PC-9 (cell line): ENCODE measurements at regions of chr7 and their contacts with region 1.

Region 1: DNA sequence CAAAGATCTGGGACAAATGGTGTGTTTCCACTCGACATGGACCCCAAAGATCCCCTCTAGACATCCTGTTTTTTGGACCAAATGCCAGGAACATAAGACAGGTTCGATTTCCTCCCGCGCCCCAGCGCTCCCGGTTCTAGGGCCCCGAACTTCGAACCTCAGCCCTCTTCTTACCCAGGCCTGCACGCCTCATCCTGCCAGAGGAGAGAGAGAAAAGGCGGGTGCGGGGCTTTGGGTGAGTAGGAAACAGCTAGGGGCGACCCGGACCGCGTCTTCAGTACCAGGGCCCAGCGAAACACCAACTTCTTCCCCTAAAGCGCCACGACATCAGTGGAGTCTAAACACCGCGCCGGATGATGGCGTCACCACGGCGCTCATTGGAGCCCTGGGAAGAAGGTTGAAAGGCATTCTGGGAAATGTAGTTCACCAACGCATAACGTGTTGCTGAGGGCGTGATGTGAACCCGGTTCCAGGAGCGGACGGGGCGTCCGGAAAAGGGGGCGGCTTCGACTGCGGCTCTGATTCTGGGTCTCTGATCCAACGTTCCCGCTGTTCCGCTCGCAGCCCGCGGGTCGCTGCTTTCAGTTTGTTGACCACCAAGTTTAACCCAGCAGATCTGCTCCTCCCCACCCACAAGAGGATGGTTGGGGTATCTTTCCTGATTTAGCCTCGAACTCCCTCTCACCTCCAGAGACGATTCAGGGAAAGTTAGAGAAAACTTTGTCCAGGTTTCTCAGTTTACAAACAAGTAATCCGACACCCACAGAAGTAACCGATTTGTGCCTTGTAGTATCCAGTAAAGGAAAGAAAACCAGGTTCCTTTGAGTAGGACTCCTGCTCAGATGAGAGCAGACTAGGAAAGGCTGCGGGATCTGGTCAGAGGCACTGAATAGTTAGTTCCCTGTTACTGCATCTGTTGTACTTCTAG is at the start of gene BET1:
- DNase-seq: peak; percentile 85 to 88
- H3K4me3 ChIP-seq: peak within 1 kb of the TSS; percentile 91
- H3K27ac ChIP-seq: peak within 1 kb of the TSS; percentile 77
- H3K4me1 ChIP-seq: peaks cover 11% of the 10 kb centered on the region
- H3K27me3 ChIP-seq: no peaks in the 10 kb centered on the region
- CTCF ChIP-seq: no peak
- total RNA-seq, gene BET1: 39.5 and 43.0 TPM in 2 replicates

Region 2: DNA sequence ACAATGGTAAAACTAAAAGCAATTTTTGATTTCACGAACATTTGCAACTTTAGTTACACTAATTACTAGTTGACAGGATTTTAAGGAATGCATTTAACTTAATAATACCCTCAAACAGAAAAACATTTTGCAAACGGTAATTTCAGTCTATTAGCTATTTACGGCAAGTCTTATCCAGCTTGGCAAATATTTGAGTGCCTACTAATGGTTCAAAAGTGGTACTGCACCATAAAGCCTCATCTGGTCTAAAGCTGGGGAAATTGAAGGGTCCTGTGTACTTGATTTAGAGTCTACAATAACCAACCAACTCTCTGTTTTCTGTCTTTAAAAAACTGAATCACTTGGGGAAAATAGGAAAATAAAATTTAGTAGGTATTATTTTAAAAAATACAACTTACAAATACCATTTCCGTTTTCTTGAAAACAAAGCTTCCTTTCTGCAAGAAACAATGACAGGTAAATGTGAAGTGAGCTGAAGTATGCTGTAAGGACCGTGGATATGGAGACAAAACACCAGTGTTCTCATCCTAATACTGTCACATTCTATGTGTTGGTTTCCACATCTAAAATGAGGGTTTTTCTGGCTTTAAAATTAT is 629.8 kb before region 1 on chr7:
- CTCF ChIA-PET with region 1: no interaction called
- POLR2A ChIA-PET with region 1: no interaction called
- intact Hi-C with region 1: no loop called
- DNase-seq: no peak
- H3K4me3 ChIP-seq: no peak overlapping the region
- H3K27ac ChIP-seq: no peak overlapping the region
- H3K4me1 ChIP-seq: no peaks in the 10 kb centered on the region
- H3K27me3 ChIP-seq: no peaks in the 10 kb centered on the region
- CTCF ChIP-seq: peak; percentile 78

Region 3: DNA sequence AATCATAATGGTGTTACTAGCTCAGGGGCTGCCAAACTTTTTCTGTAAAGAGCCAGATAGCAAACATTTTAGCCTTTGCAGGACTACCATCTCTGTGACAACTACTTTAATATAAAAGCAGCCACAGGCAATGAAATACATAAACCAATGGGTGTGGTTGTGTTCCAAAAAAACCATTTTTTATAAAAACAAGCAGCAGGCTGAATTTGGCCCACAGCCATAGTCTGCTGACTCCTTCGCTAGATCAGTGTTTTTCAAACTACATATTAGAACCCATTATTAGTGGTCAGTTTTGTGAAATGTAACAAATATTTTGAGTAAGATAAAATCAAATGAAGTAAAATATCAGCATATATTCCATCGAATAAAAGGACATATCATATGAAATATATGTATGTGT is 69.2 kb before region 1 on chr7:
- CTCF ChIA-PET with region 1: no interaction called
- POLR2A ChIA-PET with region 1: interaction called, 27 read pairs
- intact Hi-C with region 1: no loop called
- DNase-seq: no peak
- H3K4me3 ChIP-seq: no peak overlapping the region
- H3K27ac ChIP-seq: no peak overlapping the region
- H3K4me1 ChIP-seq: no peaks in the 10 kb centered on the region
- H3K27me3 ChIP-seq: no peaks in the 10 kb centered on the region
- CTCF ChIP-seq: no peak

Region 4: DNA sequence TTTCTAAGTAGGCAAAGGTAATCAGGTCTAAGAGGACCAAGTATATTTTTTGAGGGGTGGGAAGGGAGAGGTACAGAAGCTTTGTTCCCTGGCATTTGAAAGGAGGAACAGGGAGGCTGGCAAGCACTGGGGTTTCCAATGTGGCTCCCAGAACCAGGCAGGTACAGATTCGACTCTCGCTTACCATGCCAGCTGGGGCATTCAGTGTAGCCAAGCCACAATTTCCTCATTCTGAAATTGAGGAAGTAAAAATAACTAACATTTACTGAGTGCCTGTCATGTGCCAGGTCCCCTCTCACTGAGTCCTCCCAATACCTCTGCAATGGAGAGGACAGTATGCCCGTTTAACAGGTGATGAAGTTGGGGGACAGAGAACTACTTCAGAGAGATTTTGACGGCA is 45.8 kb after region 1 on chr7:
- CTCF ChIA-PET with region 1: no interaction called
- POLR2A ChIA-PET with region 1: no interaction called
- intact Hi-C with region 1: no loop called
- DNase-seq: no peak
- H3K4me3 ChIP-seq: no peak overlapping the region
- H3K27ac ChIP-seq: no peak overlapping the region
- H3K4me1 ChIP-seq: 0 out of 2 replicates have a peak, but pooled peaks cover 6% of the 10 kb centered on the region
- H3K27me3 ChIP-seq: no peaks in the 10 kb centered on the region
- CTCF ChIP-seq: no peak

Region 5: GRCh38 chr7:94276795-94277194 is 272.5 kb after region 1 on chr7:
- CTCF ChIA-PET with region 1: no interaction called
- POLR2A ChIA-PET with region 1: no interaction called
- intact Hi-C with region 1: loop called (anchors 10 kb)
- DNase-seq: peak in 1 of 2 experiments; percentile 12
- H3K4me3 ChIP-seq: no peak overlapping the region
- H3K27ac ChIP-seq: no peak overlapping the region
- H3K4me1 ChIP-seq: no peaks in the 10 kb centered on the region
- H3K27me3 ChIP-seq: no peaks in the 10 kb centered on the region
- CTCF ChIP-seq: peak; percentile 49